ENCODE measurements at regions of chr11 and their contacts with region 1.

Region 1: DNA sequence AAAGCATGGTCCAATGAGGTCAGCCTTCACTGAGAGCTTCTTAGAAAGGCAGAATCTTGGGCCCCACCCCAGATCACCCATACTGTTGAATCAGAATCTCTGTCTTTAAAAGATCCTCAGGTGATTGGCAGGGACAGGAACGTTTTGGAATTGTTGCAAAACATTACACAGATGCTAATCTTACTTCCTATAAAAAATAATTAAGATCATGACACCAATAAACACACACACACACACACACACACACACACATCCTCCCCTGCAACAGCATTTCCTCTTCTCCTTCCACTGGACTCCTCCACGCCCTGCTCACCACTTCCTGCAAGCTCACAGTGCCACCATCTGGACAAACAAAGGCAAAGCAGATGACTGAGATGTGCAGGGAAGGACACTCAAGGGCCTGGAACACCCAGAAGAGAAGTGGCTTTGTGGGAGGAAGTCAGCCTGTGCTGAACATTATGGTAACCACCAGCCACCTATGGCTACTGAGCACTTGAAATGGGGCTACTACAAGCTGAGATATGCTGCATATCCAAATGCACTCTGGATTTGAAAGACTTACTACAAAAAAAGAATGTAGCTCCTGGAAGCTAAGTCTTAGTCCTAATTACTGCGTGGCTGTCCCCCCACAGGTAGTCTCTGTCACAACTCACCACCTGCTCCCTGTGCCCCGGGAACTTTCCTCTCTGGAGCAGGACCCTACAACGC is 65.6 kb downstream of the BTG4 start:
- DNase-seq: peak; percentile 94
- ATAC-seq: peak; percentile 98
- H3K4me3 ChIP-seq: no peak overlapping the region
- H3K4me3 Mint-ChIP-seq: peak overlapping the region; percentile 1
- H3K27ac ChIP-seq: no peak overlapping the region
- H3K27ac Mint-ChIP-seq: peak overlapping the region; percentile 28
- H3K4me1 ChIP-seq: peaks cover 31 to 35% of the 10 kb centered on the region in 2 donors
- H3K4me1 Mint-ChIP-seq: peaks cover 37% of the 10 kb centered on the region
- H3K27me3 ChIP-seq: no peaks in the 10 kb centered on the region
- H3K27me3 Mint-ChIP-seq: peaks cover under 1% of the 10 kb centered on the region
- CTCF ChIP-seq: peak; percentile 74

Region 2: DNA sequence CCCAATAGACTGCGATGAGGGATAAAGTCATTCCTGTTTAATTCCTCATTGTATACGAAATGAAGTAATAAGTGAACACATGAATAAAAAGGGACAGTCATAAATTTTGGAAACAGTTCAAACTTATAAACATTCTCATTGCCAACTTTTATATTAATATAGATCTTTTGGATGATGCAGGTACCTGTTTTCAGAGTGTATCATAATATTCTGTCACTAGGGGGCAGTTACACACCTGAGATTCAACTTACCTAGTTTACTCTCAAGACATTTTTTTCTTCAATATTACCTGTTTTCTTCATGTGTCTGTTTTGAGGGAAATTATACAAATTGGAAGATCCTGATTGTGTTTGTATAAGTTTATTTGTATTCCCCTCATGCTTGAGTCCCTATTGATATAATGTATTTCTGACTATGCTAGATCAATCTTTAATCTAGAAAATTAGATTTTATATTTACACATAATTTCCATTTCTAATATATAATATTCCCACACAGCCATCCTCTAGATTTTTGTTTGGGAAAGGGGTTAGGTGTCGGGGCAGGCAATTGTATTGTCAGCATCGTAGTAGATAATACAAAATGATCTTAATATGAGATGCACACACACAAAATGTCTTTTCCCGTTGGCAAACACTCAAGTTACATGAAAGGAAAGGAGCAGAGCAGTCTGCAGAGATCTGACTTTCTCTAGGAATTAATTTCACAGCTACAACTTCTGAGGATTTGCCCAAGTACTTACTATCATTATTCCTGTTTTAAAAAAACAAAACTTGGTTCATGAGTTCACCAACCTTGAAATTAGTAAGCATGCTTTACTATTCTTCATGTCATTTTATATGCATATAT is 998.4 kb before region 1 on chr11:
- CTCF ChIA-PET with region 1: interaction called, 14 read pairs
- POLR2A ChIA-PET with region 1: no interaction called
- intact Hi-C with region 1: no loop called
- DNase-seq: peak; percentile 45
- ATAC-seq: no peak
- H3K4me3 ChIP-seq: no peak overlapping the region
- H3K4me3 Mint-ChIP-seq: no peak overlapping the region
- H3K27ac ChIP-seq: no peak overlapping the region
- H3K27ac Mint-ChIP-seq: no peak overlapping the region
- H3K4me1 ChIP-seq: no peaks in the 10 kb centered on the region
- H3K4me1 Mint-ChIP-seq: peaks cover 13% of the 10 kb centered on the region
- H3K27me3 ChIP-seq: no peaks in the 10 kb centered on the region
- H3K27me3 Mint-ChIP-seq: no peaks in the 10 kb centered on the region
- CTCF ChIP-seq: peak; percentile 77

Region 3: GRCh38 chr11:110463153-110463552 is 983.4 kb before region 1 on chr11:
- CTCF ChIA-PET with region 1: interaction called, 17 read pairs
- POLR2A ChIA-PET with region 1: no interaction called
- intact Hi-C with region 1: no loop called
- DNase-seq: peak; percentile 47
- ATAC-seq: peak; percentile 33
- H3K4me3 ChIP-seq: no peak overlapping the region
- H3K4me3 Mint-ChIP-seq: no peak overlapping the region
- H3K27ac ChIP-seq: no peak overlapping the region
- H3K27ac Mint-ChIP-seq: no peak overlapping the region
- H3K4me1 ChIP-seq: no peaks in the 10 kb centered on the region
- H3K4me1 Mint-ChIP-seq: peaks cover 1% of the 10 kb centered on the region
- H3K27me3 ChIP-seq: no peaks in the 10 kb centered on the region
- H3K27me3 Mint-ChIP-seq: no peaks in the 10 kb centered on the region
- CTCF ChIP-seq: peak; percentile 46